Heart left ventricle (tissue), 16 donors: ENCODE measurements at regions of chr22 and their contacts with region 1.

Region 1: DNA sequence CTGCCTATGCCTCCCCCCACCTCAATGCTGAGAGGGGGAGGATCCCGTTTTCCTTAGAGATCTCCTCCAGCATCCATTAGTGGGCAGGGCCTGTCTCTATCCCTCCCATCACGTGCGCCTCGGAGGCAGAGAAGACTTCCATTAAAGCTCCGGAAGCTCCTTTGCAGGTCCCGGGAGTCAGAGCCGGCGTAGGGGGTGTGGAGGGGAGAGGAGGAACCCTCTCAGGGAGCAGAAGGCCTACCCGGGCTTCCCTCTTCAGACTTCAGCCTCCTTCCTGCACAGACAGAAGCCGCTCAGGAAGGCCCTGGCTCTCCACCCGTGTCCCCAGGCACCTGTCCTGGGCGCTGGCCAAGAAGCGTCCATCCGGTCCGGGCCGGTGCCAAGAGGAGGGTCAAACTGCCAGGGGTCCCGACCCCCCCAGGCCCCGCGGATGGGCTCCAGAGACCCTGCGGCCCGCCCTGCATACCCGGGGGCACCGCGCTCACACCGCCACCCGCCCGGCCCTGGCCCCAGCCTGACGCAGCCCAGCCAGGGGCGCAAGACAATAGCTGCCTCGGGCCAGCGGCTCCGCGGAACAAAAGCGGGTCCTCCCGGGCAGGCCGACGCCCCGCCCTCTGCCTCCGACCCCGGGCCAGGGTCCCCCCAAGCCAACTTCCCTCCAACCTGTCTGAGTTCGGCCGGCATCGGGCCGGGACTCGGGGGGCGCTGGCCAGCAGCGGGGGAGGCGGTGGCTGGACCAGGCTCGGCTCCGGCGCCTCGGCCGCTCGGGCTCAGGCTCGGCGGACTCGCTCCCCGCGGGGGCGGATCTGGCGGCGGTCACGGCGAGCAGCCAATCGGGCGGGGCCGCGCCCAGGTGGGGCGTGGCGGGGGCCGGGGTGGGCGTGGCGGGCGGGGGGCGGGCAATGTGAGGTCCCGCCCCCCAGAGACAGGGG is 29.9 kb downstream of the ARVCF start:
- DNase-seq: peak; percentile 85 to 93 (median 87)
- ATAC-seq: peak; percentile 17 to 87 (median 70)
- H3K4me3 ChIP-seq: peak overlapping the region; percentile 58 to 96 (median 86)
- H3K27ac ChIP-seq: peak overlapping the region; percentile 72 to 98 (median 92)
- H3K4me1 ChIP-seq: peaks cover 4 to 78% (median 50%) of the 10 kb centered on the region in 12 donors
- H3K27me3 ChIP-seq: no peaks in the 10 kb centered on the region
- CTCF ChIP-seq: no peak
- POLR2A ChIP-seq: peak; percentile 93 to 95

Region 2: GRCh38 chr22:19772422-19773324 is 214.0 kb before region 1 on chr22:
- intact Hi-C with region 1: no loop called
- DNase-seq: peak in 1 of 5 donors; percentile 68
- ATAC-seq: peak in 3 of 4 donors; percentile 22 to 66 (median 51)
- H3K4me3 ChIP-seq: no peak overlapping the region
- H3K27ac ChIP-seq: no peak overlapping the region
- H3K4me1 ChIP-seq: peaks cover 0 to 24% (median 8%) of the 10 kb centered on the region in 12 donors
- H3K27me3 ChIP-seq: peaks cover 25 to 75% (median 44%) of the 10 kb centered on the region in 9 donors
- CTCF ChIP-seq: peak in 2 of 12 donors; percentile 3 to 19
- POLR2A ChIP-seq: no peak

Region 3: GRCh38 chr22:20000169-20000621 is 13.5 kb after region 1 on chr22:
- intact Hi-C with region 1: loop called in 1 of 10 experiments (anchors 2 kb)
- DNase-seq: peak; percentile 62 to 78 (median 70)
- ATAC-seq: peak; percentile 78 to 92 (median 88)
- H3K4me3 ChIP-seq: no peak overlapping the region
- H3K27ac ChIP-seq: peak overlapping the region in 10 of 12 donors; percentile 1 to 68 (median 56)
- H3K4me1 ChIP-seq: peaks cover 0 to 52% (median 30%) of the 10 kb centered on the region in 12 donors
- H3K27me3 ChIP-seq: no peaks in the 10 kb centered on the region
- CTCF ChIP-seq: no peak
- POLR2A ChIP-seq: no peak